BJ (cell line): ENCODE measurements at regions of chr3 and their contacts with region 1.

Region 1: GRCh38 chr3:138862924-138863775 is 28.4 kb upstream of the PIK3CB start:
- DNase-seq: no peak
- H3K4me3 ChIP-seq: no peak overlapping the region
- H3K27me3 ChIP-seq: no peaks in the 10 kb centered on the region
- CTCF ChIP-seq: no peak

Region 2: GRCh38 chr3:138296639-138297038 is 566.5 kb before region 1 on chr3:
- CTCF ChIA-PET with region 1: no interaction called
- POLR2A ChIA-PET with region 1: no interaction called
- DNase-seq: no peak
- H3K4me3 ChIP-seq: no peak overlapping the region
- H3K27me3 ChIP-seq: no peaks in the 10 kb centered on the region
- CTCF ChIP-seq: no peak

Region 3: DNA sequence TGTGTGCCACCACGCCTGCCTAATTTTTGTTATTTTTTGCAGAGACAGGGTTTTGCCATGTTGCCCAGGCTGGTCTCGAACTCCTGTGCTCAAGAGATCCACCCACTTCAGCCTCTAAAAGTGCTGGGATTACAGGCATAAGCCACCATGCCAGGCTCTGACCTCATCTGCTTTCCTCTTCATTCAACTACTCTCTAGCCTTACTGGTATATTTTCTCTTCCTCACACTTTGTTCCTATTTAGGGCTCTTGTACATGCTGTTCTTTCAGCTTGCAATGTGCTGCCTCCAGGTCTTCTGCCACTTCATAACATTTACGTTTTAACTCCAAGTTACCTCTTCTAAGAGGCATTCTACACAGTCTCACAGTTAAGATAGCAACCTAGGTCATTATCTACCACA is 63.3 kb before region 1 on chr3:
- CTCF ChIA-PET with region 1: no interaction called
- POLR2A ChIA-PET with region 1: interaction called, 22 read pairs
- DNase-seq: no peak
- H3K4me3 ChIP-seq: no peak overlapping the region
- H3K27me3 ChIP-seq: no peaks in the 10 kb centered on the region
- CTCF ChIP-seq: no peak